Natural killer cell (primary cell): ENCODE measurements at regions of chr3 and their contacts with region 1.

Region 1: DNA sequence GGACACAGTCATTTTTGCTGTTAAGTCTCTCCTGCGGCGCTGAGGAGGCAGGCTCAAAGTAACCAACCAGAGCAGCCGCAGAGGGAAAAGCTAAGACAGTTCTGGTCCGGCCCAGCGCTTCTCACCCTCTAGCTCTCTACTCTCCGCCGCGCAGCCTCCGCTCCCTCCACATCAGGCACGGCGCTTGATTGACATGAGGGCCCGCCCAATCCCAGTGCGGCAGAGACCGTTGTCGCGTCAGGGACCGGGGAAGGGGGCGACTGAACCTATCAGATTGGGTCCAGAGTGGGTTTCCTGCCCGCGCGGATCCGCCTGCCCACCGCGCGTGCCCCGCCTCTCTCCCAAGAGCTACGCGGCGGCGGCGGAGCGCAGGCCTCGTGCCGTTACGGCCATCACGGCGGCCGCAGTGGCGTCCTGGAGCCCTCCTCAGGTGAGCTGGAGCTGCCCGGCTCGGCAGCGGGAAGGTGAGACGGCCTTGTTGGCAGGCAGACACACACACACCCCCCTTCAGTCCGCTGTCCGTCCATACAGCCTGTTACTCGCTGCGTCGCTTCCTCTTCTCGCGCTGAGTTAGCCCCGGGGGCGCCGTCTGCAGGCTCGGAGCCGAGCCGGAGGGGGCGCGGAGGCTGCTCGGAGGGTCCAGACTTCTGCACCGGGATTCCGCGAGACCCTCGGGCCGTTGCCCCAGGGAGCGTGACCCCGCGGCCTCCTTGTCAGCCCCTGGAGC is at the start of gene NCK1:
- DNase-seq: peak; percentile 98 to 99
- ATAC-seq: peak; percentile 91 to 98 (median 94)
- H3K4me3 ChIP-seq: peak within 1 kb of the TSS; percentile 57
- H3K4me3 Mint-ChIP-seq: peak within 1 kb of the TSS; percentile 98
- H3K27ac ChIP-seq: peak within 1 kb of the TSS; percentile 97
- H3K27ac Mint-ChIP-seq: peak within 1 kb of the TSS; percentile 98 to 99
- H3K4me1 ChIP-seq: peaks cover 17% of the 10 kb centered on the region
- H3K4me1 Mint-ChIP-seq: peaks cover 45 to 52% of the 10 kb centered on the region in 2 donors
- H3K27me3 ChIP-seq: no peaks in the 10 kb centered on the region
- H3K27me3 Mint-ChIP-seq: no peaks in the 10 kb centered on the region
- CTCF ChIP-seq: peak; percentile 24
- total RNA-seq, gene NCK1: 61.2 to 77.9 (median 69.5) TPM

Region 2: GRCh38 chr3:136250226-136250902 is 611.7 kb before region 1 on chr3 and contains the start of gene PCCB:
- intact Hi-C with region 1: loop called (anchors 2 kb)
- DNase-seq: peak; percentile 87 to 94
- ATAC-seq: peak; percentile 93 to 98 (median 94)
- H3K4me3 ChIP-seq: peak within 1 kb of the TSS; percentile 58
- H3K4me3 Mint-ChIP-seq: peak within 1 kb of the TSS; percentile 90
- H3K27ac ChIP-seq: peak within 1 kb of the TSS; percentile 63
- H3K27ac Mint-ChIP-seq: peak within 1 kb of the TSS; percentile 90 to 93
- H3K4me1 ChIP-seq: peaks cover 14% of the 10 kb centered on the region
- H3K4me1 Mint-ChIP-seq: peaks cover 20 to 30% of the 10 kb centered on the region in 2 donors
- H3K27me3 ChIP-seq: no peaks in the 10 kb centered on the region
- H3K27me3 Mint-ChIP-seq: no peaks in the 10 kb centered on the region
- CTCF ChIP-seq: peak; percentile 89
- total RNA-seq, gene PCCB: 17.7 to 19.9 (median 17.8) TPM

Region 3: DNA sequence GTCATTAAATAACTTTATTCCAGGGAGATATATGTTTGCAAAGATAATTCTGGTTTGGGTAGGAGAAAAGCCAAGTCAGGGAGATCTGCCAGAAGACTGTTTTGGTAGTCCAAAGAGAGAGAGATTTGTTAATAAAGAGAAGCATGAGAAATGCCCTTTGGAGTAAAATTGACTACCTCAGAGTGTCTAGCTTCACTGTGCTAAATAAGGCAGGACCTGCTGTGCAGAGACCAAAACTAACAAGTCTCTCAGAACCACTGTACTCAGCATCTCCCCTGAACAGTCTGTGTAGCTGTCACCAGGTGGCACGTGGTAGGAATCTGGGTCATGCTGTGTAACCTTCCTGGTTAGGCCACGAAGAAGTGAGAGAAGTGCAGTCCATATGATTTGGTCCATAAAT is 74.7 kb before region 1 on chr3:
- intact Hi-C with region 1: loop called (anchors 2 kb)
- DNase-seq: peak; percentile 47 to 57
- ATAC-seq: peak; percentile 93 to 99 (median 97)
- H3K4me3 ChIP-seq: no peak overlapping the region
- H3K4me3 Mint-ChIP-seq: peak overlapping the region; percentile 43
- H3K27ac ChIP-seq: peak overlapping the region; percentile 29
- H3K27ac Mint-ChIP-seq: peak overlapping the region; percentile 81 to 83
- H3K4me1 ChIP-seq: peaks cover 2% of the 10 kb centered on the region
- H3K4me1 Mint-ChIP-seq: peaks cover 14 to 16% of the 10 kb centered on the region in 2 donors
- H3K27me3 ChIP-seq: no peaks in the 10 kb centered on the region
- H3K27me3 Mint-ChIP-seq: no peaks in the 10 kb centered on the region
- CTCF ChIP-seq: no peak

Region 4: DNA sequence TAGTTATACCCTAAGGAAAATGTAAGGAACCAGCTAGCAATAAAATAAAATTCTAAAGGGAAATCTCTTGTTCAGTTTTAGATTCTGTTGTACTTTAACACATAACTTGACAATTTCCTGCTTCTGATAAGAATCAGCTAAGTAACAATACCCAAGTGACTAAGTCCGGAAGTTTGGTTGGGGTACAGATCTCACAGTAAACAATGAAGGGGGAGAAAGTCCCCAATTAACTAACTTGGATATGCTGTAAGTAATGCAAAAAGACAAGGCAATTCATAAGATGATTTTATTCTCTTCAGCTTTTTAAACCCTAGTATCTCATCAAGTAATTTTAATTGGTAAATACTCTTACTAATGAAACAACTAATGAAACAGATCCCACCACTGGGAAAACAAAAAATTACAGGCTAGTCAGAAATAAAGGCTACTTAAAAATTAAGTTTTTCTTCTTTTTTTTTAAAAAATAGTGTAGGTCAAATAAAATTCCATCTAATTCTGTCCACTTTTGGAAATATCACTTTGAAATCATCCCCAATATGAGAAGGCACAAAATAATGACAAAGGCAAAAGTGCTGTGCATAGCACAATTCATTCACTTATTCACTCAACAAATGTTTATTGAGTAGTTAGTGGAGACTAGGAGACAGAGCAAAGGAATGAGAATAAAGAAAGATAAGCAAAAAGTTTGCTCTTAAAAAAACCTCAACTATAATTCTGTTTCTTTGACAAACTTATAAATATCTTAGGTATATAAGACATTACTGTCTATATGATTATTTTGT is 57.9 kb after region 1 on chr3:
- intact Hi-C with region 1: loop called (anchors 1 kb)
- DNase-seq: peak in 1 of 2 donors; percentile 84
- ATAC-seq: peak; percentile 80 to 91 (median 90)
- H3K4me3 ChIP-seq: no peak overlapping the region
- H3K4me3 Mint-ChIP-seq: peak overlapping the region; percentile 78
- H3K27ac ChIP-seq: peak overlapping the region; percentile 90
- H3K27ac Mint-ChIP-seq: peak overlapping the region; percentile 97 to 98
- H3K4me1 ChIP-seq: peaks cover 15% of the 10 kb centered on the region
- H3K4me1 Mint-ChIP-seq: peaks cover 85 to 89% of the 10 kb centered on the region in 2 donors
- H3K27me3 ChIP-seq: no peaks in the 10 kb centered on the region
- H3K27me3 Mint-ChIP-seq: no peaks in the 10 kb centered on the region
- CTCF ChIP-seq: no peak

Region 5: DNA sequence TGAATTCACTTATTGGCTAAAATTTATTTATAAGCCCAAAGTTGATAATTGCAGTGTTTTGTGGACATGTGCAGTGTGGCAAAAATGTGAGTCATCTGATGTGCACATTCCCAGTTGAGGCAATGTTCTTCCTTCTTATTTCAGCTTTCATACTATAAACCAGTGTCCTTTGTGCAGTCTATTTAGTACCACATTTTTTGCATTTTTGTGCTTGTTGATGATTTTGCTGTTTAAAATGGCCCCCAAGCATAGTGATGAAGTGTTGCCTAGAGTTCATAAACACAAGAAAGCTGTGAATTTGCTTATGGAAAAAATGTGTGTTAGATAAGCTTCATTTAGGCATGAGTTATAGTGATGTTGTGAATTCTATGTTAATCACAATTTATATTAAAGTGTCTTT is 76.3 kb after region 1 on chr3:
- intact Hi-C with region 1: loop called (anchors 5 kb)
- DNase-seq: no peak
- ATAC-seq: peak in 2 of 3 donors; percentile 42 to 72
- H3K4me3 ChIP-seq: no peak overlapping the region
- H3K4me3 Mint-ChIP-seq: no peak overlapping the region
- H3K27ac ChIP-seq: no peak overlapping the region
- H3K27ac Mint-ChIP-seq: peak overlapping the region; percentile 80 to 86
- H3K4me1 ChIP-seq: peaks cover 20% of the 10 kb centered on the region
- H3K4me1 Mint-ChIP-seq: peaks cover 62 to 73% of the 10 kb centered on the region in 2 donors
- H3K27me3 ChIP-seq: no peaks in the 10 kb centered on the region
- H3K27me3 Mint-ChIP-seq: no peaks in the 10 kb centered on the region
- CTCF ChIP-seq: no peak